ENCODE measurements at regions of chr17 and their contacts with region 1.

Region 1: GRCh38 chr17:77096570-77097214 is 44.1 kb upstream of the SEC14L1 start:
- DNase-seq: peak in 1 of 2 donors; percentile 31
- ATAC-seq: peak; percentile 26 to 52
- H3K4me3 ChIP-seq: no peak overlapping the region
- H3K27ac ChIP-seq: peak overlapping the region; percentile 78 to 85 (median 80)
- H3K4me1 ChIP-seq: peaks cover 37 to 43% of the 10 kb centered on the region in 2 donors
- H3K27me3 ChIP-seq: no peaks in the 10 kb centered on the region
- CTCF ChIP-seq: peak; percentile 61 to 76 (median 62)
- POLR2A ChIP-seq: no peak

Region 2: DNA sequence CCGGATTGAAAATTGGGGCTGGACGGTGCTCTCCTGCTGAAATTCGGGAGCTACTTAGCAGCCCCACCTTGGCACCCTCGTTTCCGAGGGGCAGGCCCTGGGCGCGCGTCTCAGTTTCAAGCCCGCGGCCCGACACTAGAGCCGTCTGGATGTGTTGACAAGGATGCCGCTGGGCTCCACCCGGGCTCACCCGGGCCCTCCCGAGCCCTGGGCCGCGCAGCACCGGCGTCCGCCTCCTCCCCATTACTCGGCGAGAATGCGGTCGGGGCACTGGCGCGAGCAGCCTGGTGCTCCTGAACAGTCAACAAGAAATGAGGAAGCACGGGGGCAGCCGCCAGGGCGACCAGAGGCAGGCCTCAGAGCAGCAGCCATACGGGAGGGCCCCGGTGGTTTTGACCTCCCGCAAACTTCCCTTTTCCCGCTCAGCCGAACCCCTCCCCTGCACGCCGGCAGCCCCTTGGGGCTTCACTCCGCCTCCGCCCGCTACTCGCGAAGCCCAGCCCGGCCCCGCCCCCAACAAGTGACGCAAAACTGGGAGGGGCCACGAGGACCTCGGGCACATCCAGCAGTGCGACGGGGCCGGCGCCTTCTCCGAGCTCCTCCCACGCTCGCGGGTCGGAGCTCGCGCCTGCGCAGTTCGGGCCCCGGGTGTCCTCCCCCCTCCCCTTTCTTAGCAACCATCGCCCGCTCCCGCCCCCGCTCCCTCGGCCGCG is 43.6 kb after region 1 on chr17:
- in situ Hi-C with region 1: no loop called
- intact Hi-C with region 1: loop called (anchors 2 kb)
- DNase-seq: peak; percentile 98 to 99
- ATAC-seq: peak; percentile 88 to 93
- H3K4me3 ChIP-seq: peak overlapping the region; percentile 69 to 83 (median 74)
- H3K27ac ChIP-seq: peak overlapping the region; percentile 92 to 98 (median 98)
- H3K4me1 ChIP-seq: peaks cover 27 to 31% of the 10 kb centered on the region in 2 donors
- H3K27me3 ChIP-seq: no peaks in the 10 kb centered on the region
- CTCF ChIP-seq: peak in 2 of 5 experiments; percentile 19 to 25
- POLR2A ChIP-seq: peak; percentile 98 to 100

Region 3: DNA sequence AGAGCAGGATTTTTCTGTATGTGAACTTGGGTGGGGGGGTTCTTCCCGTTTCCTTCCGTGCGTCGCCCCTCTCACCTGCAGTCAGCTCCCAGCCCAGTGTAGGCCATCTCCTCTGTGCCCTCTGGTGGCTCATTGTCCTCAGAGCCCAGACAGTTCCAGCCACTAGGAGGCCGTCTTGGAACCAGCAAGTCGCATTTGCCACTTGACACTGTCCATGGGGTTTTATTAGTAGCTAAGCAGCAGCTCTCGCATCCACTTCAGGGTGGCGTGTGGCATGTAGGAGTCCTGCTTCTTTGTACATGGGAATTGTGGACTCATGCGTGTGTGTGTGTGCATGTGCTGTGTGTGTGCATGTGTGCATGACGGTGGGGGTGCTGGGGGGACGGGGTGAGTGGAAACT is 118.1 kb after region 1 on chr17:
- in situ Hi-C with region 1: loop called in 1 of 4 experiments (anchors 10 kb)
- intact Hi-C with region 1: no loop called
- DNase-seq: peak in 1 of 2 donors; percentile 68
- ATAC-seq: peak; percentile 64 to 84
- H3K4me3 ChIP-seq: no peak overlapping the region
- H3K27ac ChIP-seq: peak overlapping the region in 3 of 4 donors; percentile 31 to 42 (median 39)
- H3K4me1 ChIP-seq: peaks cover 31 to 42% of the 10 kb centered on the region in 2 donors
- H3K27me3 ChIP-seq: no peaks in the 10 kb centered on the region
- CTCF ChIP-seq: peak; percentile 47 to 67 (median 58)
- POLR2A ChIP-seq: no peak

Region 4: GRCh38 chr17:77345260-77345910 is 248.7 kb after region 1 on chr17:
- in situ Hi-C with region 1: no loop called
- intact Hi-C with region 1: no loop called
- DNase-seq: no peak
- ATAC-seq: peak in 1 of 2 donors; percentile 57
- H3K4me3 ChIP-seq: no peak overlapping the region
- H3K27ac ChIP-seq: peak overlapping the region in 1 of 4 donors; percentile 8
- H3K4me1 ChIP-seq: peaks cover 7 to 37% of the 10 kb centered on the region in 2 donors
- H3K27me3 ChIP-seq: no peaks in the 10 kb centered on the region
- CTCF ChIP-seq: peak in 1 of 5 experiments; percentile 8
- POLR2A ChIP-seq: no peak

Measured in gastrocnemius medialis (tissue), 4 donors.